GM13976 (cell line): ENCODE measurements at regions of chr1 and their contacts with region 1.

Region 1: DNA sequence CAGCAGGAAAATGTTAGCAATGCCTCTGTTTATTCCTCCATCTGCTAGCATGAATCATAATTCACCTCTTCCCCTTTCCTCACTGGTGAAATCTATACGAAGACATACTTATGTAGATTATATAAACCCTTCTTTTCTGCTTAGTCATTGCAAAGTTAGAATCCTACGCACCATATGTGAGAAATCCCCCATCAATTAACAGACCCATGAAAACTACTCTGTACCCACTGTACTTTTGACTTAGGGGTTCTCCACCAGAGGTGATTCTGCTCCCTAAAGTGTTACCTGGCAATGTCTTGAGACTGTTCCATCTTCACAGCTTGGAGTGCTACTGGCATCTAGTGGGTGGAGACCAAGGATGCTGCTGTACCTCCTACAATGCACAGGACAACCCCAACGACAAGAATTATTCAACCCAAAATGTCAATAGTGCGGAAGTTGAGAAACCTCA is 49.6 kb upstream of the KCTD3 start:
- DNase-seq: no peak
- CTCF ChIP-seq: no peak

Region 2: GRCh38 chr1:214660862-214661261 is 856.6 kb before region 1 on chr1:
- in situ Hi-C with region 1: loop called (anchors 25 kb)
- DNase-seq: no peak
- CTCF ChIP-seq: no peak

Region 3: DNA sequence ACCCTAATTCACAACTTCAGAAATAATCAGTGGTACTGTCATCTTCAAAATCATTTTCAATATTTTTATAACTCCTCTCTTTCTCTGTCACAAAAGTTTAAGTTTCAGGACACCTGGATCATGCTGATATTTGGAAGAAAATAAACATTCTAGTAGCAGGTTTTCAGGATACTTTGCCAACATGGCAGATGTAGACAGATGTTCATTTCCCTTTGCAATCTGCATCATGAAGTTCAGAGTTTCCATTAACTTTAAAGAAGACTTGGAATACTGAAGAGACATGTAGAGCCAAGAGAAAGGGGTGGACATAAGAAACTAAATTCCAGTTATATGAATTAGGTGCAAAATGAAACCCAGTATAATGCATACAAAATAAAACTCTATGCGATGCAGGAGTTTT is 687.7 kb after region 1 on chr1:
- in situ Hi-C with region 1: no loop called
- DNase-seq: no peak
- CTCF ChIP-seq: no peak